Naive thymus-derived CD8-positive, alpha-beta T cell (primary cell): ENCODE measurements at regions of chr1 and their contacts with region 1.

Region 1: GRCh38 chr1:100921109-100921706 is 25.3 kb downstream of the SLC30A7 start:
- DNase-seq: peak in 3 of 10 donors; percentile 59 to 73 (median 63)
- ATAC-seq: no peak
- H3K4me3 Mint-ChIP-seq: peak overlapping the region in 2 of 10 donors; percentile 31 to 34
- H3K27ac Mint-ChIP-seq: peak overlapping the region in 9 of 10 donors; percentile 56 to 94 (median 84)
- H3K4me1 Mint-ChIP-seq: peaks cover 14 to 49% (median 25%) of the 10 kb centered on the region in 4 donors
- H3K27me3 Mint-ChIP-seq: no peaks in the 10 kb centered on the region

Region 2: DNA sequence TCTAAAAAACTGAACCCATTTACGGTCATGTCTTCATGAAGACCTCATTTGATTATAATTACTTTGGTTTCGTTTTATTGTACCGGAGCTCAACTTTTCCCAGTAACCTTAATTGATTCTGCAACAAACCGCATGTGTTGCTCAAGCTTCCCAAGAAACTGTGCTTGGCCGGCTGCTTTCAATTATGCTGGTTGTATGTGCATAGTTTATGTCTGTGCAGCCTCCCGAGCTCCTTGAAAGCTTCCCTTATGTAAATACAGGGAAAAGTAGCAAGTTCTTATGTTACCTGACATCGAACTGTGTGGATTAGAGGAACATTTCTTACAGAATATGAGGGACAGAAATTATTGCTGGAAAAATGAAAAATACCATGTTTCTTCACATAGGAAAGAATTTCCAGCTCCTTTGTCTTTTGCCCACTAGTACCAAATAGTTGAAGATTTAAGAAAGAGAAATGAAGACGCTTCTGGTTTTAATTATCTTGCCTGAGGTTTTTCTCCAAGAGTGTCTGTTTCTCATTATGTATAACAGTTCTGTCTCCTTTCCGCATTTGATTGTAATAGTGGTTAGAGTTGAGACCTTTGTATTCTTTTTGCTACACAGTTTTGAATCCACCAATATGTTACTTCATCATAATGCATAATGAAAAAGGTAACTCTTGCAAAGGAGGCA is 199.5 kb before region 1 on chr1:
- POLR2A ChIA-PET with region 1: no interaction called
- DNase-seq: no peak
- ATAC-seq: no peak
- H3K4me3 Mint-ChIP-seq: no peak overlapping the region
- H3K27ac Mint-ChIP-seq: no peak overlapping the region
- H3K4me1 Mint-ChIP-seq: no peaks in the 10 kb centered on the region
- H3K27me3 Mint-ChIP-seq: peaks cover 5 to 15% (median 6%) of the 10 kb centered on the region in 5 donors

Region 3: DNA sequence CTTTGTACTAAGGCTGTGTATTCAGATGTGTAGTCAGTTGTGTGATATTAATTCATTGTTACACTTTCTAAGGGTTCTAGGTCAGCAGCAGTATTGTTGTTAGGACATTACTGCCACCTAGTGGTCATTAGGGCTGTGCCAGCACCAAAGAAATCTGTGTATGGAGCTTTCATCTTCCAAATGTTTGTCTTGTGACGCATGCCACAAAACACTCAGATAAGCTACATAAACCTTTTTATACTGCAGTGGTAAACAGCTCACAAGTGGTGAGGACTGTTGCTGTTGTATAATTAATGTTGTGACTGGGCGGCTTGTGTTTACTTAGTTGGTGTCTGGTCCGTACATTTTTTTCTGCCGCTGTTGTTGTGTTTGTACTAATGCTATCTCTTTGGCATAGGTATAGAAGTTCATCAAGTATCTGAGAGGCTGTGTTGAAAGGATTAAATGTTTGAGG is 367.3 kb after region 1 on chr1:
- POLR2A ChIA-PET with region 1: interaction called, 20 read pairs
- DNase-seq: peak; percentile 10 to 84 (median 72)
- ATAC-seq: peak; percentile 58 to 70
- H3K4me3 Mint-ChIP-seq: peak overlapping the region in 5 of 10 donors; percentile 2 to 58 (median 26)
- H3K27ac Mint-ChIP-seq: peak overlapping the region; percentile 65 to 87 (median 84)
- H3K4me1 Mint-ChIP-seq: peaks cover 39 to 81% (median 74%) of the 10 kb centered on the region in 4 donors
- H3K27me3 Mint-ChIP-seq: no peaks in the 10 kb centered on the region